ENCODE measurements at regions of chr10 and their contacts with region 1.

Region 1: GRCh38 chr10:116268976-116269375 is 4.0 kb downstream of the GFRA1 start:
- DNase-seq: no peak
- H3K4me3 ChIP-seq: no peak overlapping the region
- CTCF ChIP-seq: no peak

Region 2: DNA sequence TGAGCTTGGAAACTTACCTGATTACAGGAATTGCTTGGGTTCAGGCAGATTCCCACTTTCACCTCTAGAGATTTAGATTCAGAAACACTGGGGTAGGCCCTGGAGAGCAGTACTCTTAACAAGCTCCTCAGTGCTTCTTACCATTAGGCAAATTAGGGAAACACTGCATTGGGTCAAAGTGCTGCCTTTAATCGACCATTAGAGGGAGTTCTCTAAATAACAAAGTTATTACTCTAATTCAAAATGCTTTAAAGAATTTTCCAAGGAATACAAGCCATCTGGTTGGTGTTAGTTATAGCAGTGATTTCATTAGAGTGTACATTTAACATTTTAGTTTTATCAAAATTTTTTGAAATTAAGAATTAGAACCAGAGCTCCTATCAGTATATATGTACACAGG is 320.5 kb before region 1 on chr10:
- in situ Hi-C with region 1: loop called (anchors 10 kb)
- DNase-seq: peak; percentile 36
- H3K4me3 ChIP-seq: no peak overlapping the region
- CTCF ChIP-seq: peak; percentile 56

Region 3: DNA sequence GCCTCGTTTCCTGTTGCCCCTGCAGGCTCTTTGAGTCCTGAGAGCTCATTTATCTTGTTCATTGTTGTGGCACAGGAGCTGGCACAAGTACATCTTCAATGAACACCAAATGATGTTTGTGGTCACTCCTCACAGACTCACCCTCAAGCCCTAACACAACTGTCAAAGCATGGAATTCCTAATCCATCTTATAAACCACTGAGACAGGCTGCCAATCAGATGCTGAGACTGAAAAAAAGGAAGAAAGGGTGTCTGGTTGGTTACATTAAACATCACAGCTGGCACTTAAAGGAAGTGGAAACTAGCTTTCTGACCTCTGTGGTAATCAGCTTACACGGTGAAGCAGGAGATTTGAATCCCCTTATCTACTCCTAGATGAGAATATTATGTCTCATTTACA is 47.6 kb after region 1 on chr10:
- in situ Hi-C with region 1: no loop called
- DNase-seq: peak; percentile 43
- H3K4me3 ChIP-seq: no peak overlapping the region
- CTCF ChIP-seq: no peak

Region 4: DNA sequence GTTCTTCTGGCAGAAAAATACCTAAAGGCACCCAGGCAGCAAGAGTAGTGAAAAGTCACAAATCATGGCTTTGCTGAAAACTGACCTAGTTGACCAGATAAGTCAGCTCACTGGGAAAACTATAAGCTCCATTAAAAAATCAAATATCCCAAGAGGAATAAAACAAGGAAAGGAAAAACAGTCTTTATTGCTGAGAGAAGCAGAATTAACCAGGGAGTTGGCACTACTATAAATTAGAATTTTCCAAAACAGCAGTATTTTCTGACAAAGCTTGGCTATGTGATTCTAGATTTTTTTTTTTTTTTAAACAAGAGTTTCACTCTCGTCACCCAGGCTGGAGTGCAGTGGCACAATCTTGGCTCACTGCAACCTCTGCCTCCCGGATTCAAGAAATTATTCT is 67.9 kb after region 1 on chr10:
- in situ Hi-C with region 1: no loop called
- DNase-seq: no peak
- H3K4me3 ChIP-seq: no peak overlapping the region
- CTCF ChIP-seq: no peak